ENCODE measurements at regions of chr6 and their contacts with region 1.

Region 1: GRCh38 chr6:138026336-138026735 is 80.9 kb downstream of the PERP start:
- DNase-seq: no peak
- ATAC-seq: no peak
- H3K4me3 ChIP-seq: no peak overlapping the region
- H3K4me3 Mint-ChIP-seq: no peak overlapping the region
- H3K27ac ChIP-seq: no peak overlapping the region
- H3K27ac Mint-ChIP-seq: no peak overlapping the region
- H3K4me1 ChIP-seq: no peaks in the 10 kb centered on the region
- H3K4me1 Mint-ChIP-seq: peaks cover 0 to 1% (median 0%) of the 10 kb centered on the region in 7 donors
- H3K27me3 ChIP-seq: no peaks in the 10 kb centered on the region
- H3K27me3 Mint-ChIP-seq: peaks cover 8 to 23% (median 21%) of the 10 kb centered on the region in 5 donors

Region 2: GRCh38 chr6:138012682-138013081 is 13.7 kb before region 1 on chr6:
- CTCF ChIA-PET with region 1: no interaction called
- POLR2A ChIA-PET with region 1: no interaction called
- intact Hi-C with region 1: no loop called
- DNase-seq: peak in 2 of 9 donors; percentile 15 to 36
- ATAC-seq: no peak
- H3K4me3 ChIP-seq: no peak overlapping the region
- H3K4me3 Mint-ChIP-seq: no peak overlapping the region
- H3K27ac ChIP-seq: no peak overlapping the region
- H3K27ac Mint-ChIP-seq: no peak overlapping the region
- H3K4me1 ChIP-seq: no peaks in the 10 kb centered on the region
- H3K4me1 Mint-ChIP-seq: no peaks in the 10 kb centered on the region
- H3K27me3 ChIP-seq: no peaks in the 10 kb centered on the region
- H3K27me3 Mint-ChIP-seq: peaks cover 0 to 8% (median 0%) of the 10 kb centered on the region in 5 donors

Region 3: DNA sequence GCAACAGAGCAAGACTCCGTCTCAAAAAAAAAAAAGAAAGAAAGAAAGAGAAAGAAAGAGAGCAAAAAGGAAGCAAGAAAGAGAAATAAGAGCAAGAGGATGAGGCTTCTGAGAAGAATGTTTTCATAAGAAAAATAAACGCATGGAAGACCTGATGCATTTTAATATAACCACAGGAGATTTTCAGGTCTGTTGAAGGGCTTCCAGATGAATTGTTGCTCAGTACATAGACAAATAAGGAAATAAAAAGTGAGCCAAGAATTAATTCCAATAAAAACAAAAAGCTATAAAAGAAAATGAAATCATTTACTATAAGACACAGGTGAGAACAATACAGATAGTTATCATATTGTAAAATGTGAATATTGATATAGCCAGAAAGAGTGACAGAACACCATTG is 37.4 kb after region 1 on chr6:
- CTCF ChIA-PET with region 1: no interaction called
- POLR2A ChIA-PET with region 1: no interaction called
- intact Hi-C with region 1: loop called in 1 of 2 experiments (anchors 1 kb)
- DNase-seq: no peak
- ATAC-seq: no peak
- H3K4me3 ChIP-seq: no peak overlapping the region
- H3K4me3 Mint-ChIP-seq: no peak overlapping the region
- H3K27ac ChIP-seq: no peak overlapping the region
- H3K27ac Mint-ChIP-seq: no peak overlapping the region
- H3K4me1 ChIP-seq: no peaks in the 10 kb centered on the region
- H3K4me1 Mint-ChIP-seq: peaks cover 0 to 5% (median 0%) of the 10 kb centered on the region in 7 donors
- H3K27me3 ChIP-seq: no peaks in the 10 kb centered on the region
- H3K27me3 Mint-ChIP-seq: peaks cover 0 to 25% (median 4%) of the 10 kb centered on the region in 5 donors

Region 4: DNA sequence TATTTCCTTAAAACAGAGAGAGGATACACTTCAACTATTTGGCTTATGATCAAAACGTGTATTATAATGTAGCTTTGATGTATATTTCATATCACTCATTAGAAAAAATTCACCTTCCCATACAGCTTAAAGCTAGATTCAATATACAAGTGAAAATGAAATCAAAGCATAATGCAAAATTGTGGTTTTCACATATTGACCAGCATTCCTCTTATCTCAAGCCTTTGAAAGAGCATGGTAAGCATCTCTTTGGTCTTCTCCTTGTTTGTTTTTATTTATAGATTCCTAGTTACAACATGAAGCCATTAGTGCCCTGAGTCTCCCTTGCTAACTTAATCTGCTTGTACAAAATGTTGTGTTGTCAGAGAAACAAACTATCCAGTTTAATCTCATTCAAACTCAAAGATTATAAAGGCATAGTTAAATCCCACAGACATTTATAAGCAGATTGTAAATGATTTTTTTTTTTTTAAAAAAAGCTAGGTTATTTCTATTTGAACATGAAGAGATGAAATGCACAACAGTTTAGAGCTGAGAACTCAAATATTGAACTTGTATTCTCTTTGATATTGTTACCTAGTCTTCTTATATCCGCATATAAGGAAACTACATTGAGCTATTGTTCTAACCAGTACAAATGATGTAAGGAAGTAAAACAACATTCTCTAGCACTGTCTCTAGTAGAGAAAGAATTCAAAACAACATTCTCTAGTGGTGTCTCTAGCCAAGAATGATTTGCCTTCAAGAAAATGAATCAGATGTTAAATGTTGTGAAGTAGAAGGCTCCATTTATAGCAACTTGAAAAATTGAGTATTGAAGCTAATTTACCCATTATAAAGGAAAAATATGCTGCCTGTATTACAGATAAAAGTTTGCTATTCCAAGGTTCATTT is 320.2 kb after region 1 on chr6:
- CTCF ChIA-PET with region 1: no interaction called
- POLR2A ChIA-PET with region 1: no interaction called
- intact Hi-C with region 1: no loop called
- DNase-seq: no peak
- ATAC-seq: no peak
- H3K4me3 ChIP-seq: no peak overlapping the region
- H3K4me3 Mint-ChIP-seq: no peak overlapping the region
- H3K27ac ChIP-seq: no peak overlapping the region
- H3K27ac Mint-ChIP-seq: no peak overlapping the region
- H3K4me1 ChIP-seq: no peaks in the 10 kb centered on the region
- H3K4me1 Mint-ChIP-seq: no peaks in the 10 kb centered on the region
- H3K27me3 ChIP-seq: peaks cover 0 to 3% of the 10 kb centered on the region in 2 donors
- H3K27me3 Mint-ChIP-seq: peaks cover 6 to 35% (median 17%) of the 10 kb centered on the region in 5 donors